ENCODE measurements at regions of chr2 and their contacts with region 1.

Region 1: GRCh38 chr2:152445791-152446201 is 110.8 kb downstream of the FMNL2 start:
- DNase-seq: no peak
- H3K4me3 Mint-ChIP-seq: no peak overlapping the region
- H3K27ac Mint-ChIP-seq: peak overlapping the region; percentile 11
- H3K4me1 Mint-ChIP-seq: peaks cover 13% of the 10 kb centered on the region
- H3K27me3 Mint-ChIP-seq: peaks cover 3% of the 10 kb centered on the region

Region 2: GRCh38 chr2:152415231-152415642 is 30.6 kb before region 1 on chr2:
- intact Hi-C with region 1: loop called (anchors 1 kb)
- DNase-seq: no peak
- H3K4me3 Mint-ChIP-seq: peak overlapping the region; percentile 16
- H3K27ac Mint-ChIP-seq: peak overlapping the region; percentile 77
- H3K4me1 Mint-ChIP-seq: peaks cover 41% of the 10 kb centered on the region
- H3K27me3 Mint-ChIP-seq: no peaks in the 10 kb centered on the region

Region 3: DNA sequence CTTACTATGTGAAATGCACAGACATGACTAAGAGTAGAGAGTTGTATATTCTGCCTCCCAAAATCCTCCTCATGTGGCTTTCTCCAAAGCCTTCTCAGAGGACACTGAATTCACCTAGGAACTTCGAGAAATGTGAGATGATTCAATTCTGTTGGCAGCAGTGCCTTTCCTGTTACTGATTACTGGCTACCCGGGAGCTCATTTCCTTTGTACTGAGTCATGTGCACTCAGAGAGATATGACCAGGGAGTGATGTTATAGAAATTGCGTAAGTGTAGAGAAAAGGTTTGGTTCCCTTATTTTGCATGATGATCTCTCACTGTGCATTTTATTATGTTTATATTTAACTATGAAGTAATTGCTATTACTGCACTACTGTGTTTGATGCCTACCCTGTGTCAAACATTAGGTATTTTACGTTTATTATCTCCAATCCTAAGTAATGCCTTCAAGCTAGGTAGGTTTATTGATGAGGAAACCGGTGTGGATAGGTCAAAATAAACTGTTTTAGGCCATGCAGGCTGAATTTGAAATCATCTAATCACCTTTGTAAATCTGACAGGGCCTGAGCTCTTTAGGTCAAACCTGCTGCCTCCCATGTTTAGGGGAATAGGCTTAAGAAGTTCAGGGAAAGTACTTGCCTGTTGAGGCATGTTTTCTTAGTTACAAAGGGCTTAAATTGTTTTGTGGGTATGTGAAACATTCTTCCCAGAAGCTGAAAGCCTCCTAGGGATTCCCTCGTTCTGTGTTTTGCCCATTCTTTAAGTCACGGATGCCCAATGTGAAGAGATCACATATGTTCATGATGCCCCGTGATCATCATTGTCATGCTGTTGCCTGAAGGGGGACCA is 24.1 kb before region 1 on chr2:
- intact Hi-C with region 1: loop called (anchors 1 kb)
- DNase-seq: no peak
- H3K4me3 Mint-ChIP-seq: no peak overlapping the region
- H3K27ac Mint-ChIP-seq: no peak overlapping the region
- H3K4me1 Mint-ChIP-seq: peaks cover 33% of the 10 kb centered on the region
- H3K27me3 Mint-ChIP-seq: no peaks in the 10 kb centered on the region

Region 4: DNA sequence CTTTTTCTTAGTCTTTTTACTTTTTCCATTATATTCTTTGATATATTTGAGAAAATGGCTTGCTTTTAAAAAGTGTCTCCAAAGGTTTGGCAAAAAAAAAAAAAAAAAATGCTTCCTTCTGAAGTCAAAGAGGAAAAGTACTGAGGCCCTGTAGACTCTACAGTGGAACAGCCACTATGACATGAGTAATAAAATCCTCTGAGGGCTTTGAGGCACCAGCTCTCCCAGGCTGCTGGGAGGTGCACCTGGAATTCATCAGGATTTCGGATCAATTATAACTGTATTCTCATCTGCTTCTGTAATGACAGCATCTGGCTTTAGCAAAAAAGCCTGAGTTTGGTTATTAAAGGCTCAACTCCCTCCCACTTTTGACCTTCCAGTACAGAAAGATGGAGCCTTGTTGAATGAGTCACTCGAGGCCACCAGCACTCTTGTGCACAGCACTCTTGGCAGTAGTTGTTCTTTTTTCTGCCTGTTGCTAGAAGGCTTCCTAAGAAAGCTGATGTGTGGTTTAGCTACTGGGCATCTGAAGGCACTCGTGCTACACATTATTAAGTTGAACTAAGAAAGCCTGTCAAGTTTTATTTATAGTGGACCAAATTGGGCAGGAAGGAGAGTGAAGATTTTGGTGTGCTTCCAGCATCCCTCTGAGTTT is 140.2 kb after region 1 on chr2:
- intact Hi-C with region 1: loop called (anchors 5 kb)
- DNase-seq: no peak
- H3K4me3 Mint-ChIP-seq: no peak overlapping the region
- H3K27ac Mint-ChIP-seq: no peak overlapping the region
- H3K4me1 Mint-ChIP-seq: no peaks in the 10 kb centered on the region
- H3K27me3 Mint-ChIP-seq: peaks cover 4% of the 10 kb centered on the region

Region 5: DNA sequence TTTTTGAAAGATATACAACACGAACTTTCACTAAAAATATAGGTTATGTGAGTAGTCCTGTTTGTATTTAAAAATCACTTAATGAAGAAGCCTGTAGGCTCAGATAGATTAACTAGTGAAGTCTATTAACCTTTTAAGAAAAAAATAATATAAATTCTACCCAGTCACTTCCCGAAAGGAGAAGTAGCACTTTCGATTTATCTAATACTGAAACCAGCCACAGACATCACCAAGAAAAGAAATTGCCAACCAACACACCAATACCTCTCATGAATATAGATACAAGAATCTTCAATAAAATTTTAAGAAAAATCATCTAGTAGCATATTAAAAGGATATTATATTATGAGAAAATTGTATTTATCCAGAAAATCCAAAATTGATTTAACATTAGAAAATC is 1586.4 kb after region 1 on chr2:
- intact Hi-C with region 1: no loop called
- DNase-seq: no peak
- H3K4me3 Mint-ChIP-seq: no peak overlapping the region
- H3K27ac Mint-ChIP-seq: no peak overlapping the region
- H3K4me1 Mint-ChIP-seq: no peaks in the 10 kb centered on the region
- H3K27me3 Mint-ChIP-seq: no peaks in the 10 kb centered on the region

Measured in activated T-helper 1 cell treated with anti-CD3 and anti-CD28 coated beads, Interleukin-12 subunit alpha, Interleukin-12 subunit beta, Interleukin-2, Interleukin-4 antibody, amounts not matched to agents 30 ng/mL and 10 ng/mL and 1 ng/mL, durations not matched to agents 14 hours and 24 hours and 36 hours (primary cell).